Caco-2 (cell line): ENCODE measurements at regions of chr1 and their contacts with region 1.

Region 1: GRCh38 chr1:15116966-15117365 is 36.6 kb upstream of the TMEM51 start:
- DNase-seq: no peak
- H3K4me3 ChIP-seq: no peak overlapping the region
- H3K4me3 Mint-ChIP-seq: no peak overlapping the region
- H3K27ac Mint-ChIP-seq: no peak overlapping the region
- H3K4me1 ChIP-seq: no peaks in the 10 kb centered on the region
- H3K4me1 Mint-ChIP-seq: no peaks in the 10 kb centered on the region
- H3K27me3 ChIP-seq: no peaks in the 10 kb centered on the region
- H3K27me3 Mint-ChIP-seq: no peaks in the 10 kb centered on the region
- CTCF ChIP-seq: no peak

Region 2: DNA sequence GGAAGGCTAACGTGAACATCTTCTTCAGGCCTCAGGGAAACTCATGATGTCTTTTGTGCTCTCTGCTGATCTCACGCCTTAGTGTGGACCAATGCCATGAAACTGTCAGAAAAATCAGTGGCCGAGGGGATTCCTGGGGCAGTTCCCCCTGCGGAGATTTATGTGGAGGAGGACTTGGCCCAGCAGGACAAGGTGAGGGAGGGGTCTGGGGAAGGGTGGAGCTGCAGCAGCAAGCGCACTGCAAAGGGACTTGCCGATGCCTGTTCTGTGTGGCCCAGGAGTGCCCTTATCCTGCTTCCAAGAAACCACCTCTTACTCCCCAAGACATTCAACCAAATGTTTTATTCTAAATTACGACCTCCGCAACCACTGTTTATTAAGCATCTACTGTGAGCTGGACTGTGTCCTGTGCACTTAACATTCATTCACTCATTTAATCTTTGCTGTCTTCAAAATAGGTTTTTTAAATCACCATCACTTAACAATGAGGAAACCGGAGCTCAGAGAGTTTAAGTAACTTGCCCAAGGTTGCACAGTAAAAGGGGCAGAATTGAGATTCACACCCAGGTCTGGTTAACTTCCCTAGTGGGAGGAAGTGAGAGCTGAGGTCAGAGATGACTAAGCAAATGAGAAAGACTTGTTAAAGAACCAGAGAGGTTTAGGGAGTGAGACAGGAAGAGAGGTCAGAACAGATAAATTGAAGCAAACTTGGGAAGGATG is 179.8 kb after region 1 on chr1:
- CTCF ChIA-PET with region 1: no interaction called
- POLR2A ChIA-PET with region 1: interaction called, 10 read pairs
- intact Hi-C with region 1: no loop called
- DNase-seq: no peak
- H3K4me3 ChIP-seq: no peak overlapping the region
- H3K4me3 Mint-ChIP-seq: no peak overlapping the region
- H3K27ac Mint-ChIP-seq: no peak overlapping the region
- H3K4me1 ChIP-seq: no peaks in the 10 kb centered on the region
- H3K4me1 Mint-ChIP-seq: no peaks in the 10 kb centered on the region
- H3K27me3 ChIP-seq: no peaks in the 10 kb centered on the region
- H3K27me3 Mint-ChIP-seq: no peaks in the 10 kb centered on the region
- CTCF ChIP-seq: no peak